Naive thymus-derived CD8-positive, alpha-beta T cell (primary cell): ENCODE measurements at regions of chr11 and their contacts with region 1.

Region 1: GRCh38 chr11:66677599-66678375 is at the start of gene RBM4B:
- DNase-seq: peak; percentile 93 to 98 (median 96)
- ATAC-seq: peak; percentile 83 to 84
- H3K4me3 Mint-ChIP-seq: peak within 1 kb of the TSS; percentile 85 to 98 (median 96)
- H3K27ac Mint-ChIP-seq: peak within 1 kb of the TSS; percentile 95 to 100 (median 99)
- H3K4me1 Mint-ChIP-seq: peaks cover 21 to 48% (median 42%) of the 10 kb centered on the region in 4 donors
- H3K27me3 Mint-ChIP-seq: no peaks in the 10 kb centered on the region
- polyA plus RNA-seq, gene RBM4B: 7.7 to 12.3 (median 10.8) TPM

Region 2: GRCh38 chr11:66438504-66439466 is 239.0 kb before region 1 on chr11 and contains the start of gene MRPL11:
- POLR2A ChIA-PET with region 1: interaction called, 13 read pairs
- DNase-seq: peak; percentile 74 to 95 (median 88)
- ATAC-seq: peak; percentile 96 to 98
- H3K4me3 Mint-ChIP-seq: peak within 1 kb of the TSS; percentile 87 to 96 (median 92)
- H3K27ac Mint-ChIP-seq: peak within 1 kb of the TSS; percentile 24 to 99 (median 98)
- H3K4me1 Mint-ChIP-seq: peaks cover 5 to 16% (median 9%) of the 10 kb centered on the region in 4 donors
- H3K27me3 Mint-ChIP-seq: peaks cover 0 to 6% (median 0%) of the 10 kb centered on the region in 5 donors
- polyA plus RNA-seq, gene MRPL11: 86.9 to 98.2 (median 87.9) TPM

Region 3: DNA sequence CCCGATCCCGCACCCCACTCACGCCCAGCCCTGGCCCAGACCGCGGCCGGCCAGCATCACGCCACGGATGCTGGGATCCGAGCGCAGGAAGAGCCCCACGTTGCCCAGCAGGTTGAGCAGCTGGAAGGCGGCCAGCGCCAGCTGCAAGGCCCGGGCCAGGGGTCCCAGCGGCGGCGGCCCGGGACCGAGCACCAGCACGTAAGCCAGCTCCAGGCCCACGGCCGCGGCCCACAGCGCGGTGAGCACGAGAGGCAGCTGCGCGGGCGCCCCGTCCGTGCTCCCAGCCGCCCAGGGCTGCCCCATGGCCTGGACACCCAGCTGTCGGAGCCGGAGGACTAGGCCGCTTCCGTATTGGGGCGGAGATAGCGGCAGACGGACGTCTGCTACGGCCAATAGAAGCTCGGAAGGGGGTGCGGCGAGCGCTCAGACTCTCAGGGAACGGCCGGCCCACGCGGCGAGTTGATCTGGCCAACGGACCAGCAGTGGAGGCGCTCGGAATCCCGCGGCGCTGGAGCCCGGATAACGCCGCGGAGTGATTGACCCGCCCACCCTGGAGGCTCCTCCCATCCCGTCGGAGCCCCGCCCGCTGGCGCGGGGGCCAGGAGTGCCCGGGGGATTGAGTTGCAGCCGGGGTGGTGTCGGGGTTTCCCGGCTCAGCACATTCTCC is 132.0 kb before region 1 on chr11 and contains the start of gene ZDHHC24:
- POLR2A ChIA-PET with region 1: interaction called, 41 read pairs
- DNase-seq: peak; percentile 64 to 84 (median 77)
- ATAC-seq: peak; percentile 77 to 78
- H3K4me3 Mint-ChIP-seq: peak within 1 kb of the TSS; percentile 85 to 95 (median 88)
- H3K27ac Mint-ChIP-seq: peak within 1 kb of the TSS; percentile 71 to 96 (median 92)
- H3K4me1 Mint-ChIP-seq: peaks cover 36 to 47% (median 41%) of the 10 kb centered on the region in 4 donors
- H3K27me3 Mint-ChIP-seq: no peaks in the 10 kb centered on the region
- polyA plus RNA-seq, gene ZDHHC24: 9.6 to 14.1 (median 10.5) TPM

Region 4: GRCh38 chr11:66579017-66579606 is 98.7 kb before region 1 on chr11:
- POLR2A ChIA-PET with region 1: interaction called, 46 read pairs
- DNase-seq: peak; percentile 64 to 89 (median 76)
- ATAC-seq: peak; percentile 86 to 99
- H3K4me3 Mint-ChIP-seq: peak overlapping the region in 1 of 10 donors; percentile 19
- H3K27ac Mint-ChIP-seq: peak overlapping the region in 3 of 10 donors; percentile 5 to 60 (median 17)
- H3K4me1 Mint-ChIP-seq: peaks cover 6 to 14% (median 9%) of the 10 kb centered on the region in 4 donors
- H3K27me3 Mint-ChIP-seq: peaks cover 6 to 22% (median 19%) of the 10 kb centered on the region in 5 donors

Region 5: DNA sequence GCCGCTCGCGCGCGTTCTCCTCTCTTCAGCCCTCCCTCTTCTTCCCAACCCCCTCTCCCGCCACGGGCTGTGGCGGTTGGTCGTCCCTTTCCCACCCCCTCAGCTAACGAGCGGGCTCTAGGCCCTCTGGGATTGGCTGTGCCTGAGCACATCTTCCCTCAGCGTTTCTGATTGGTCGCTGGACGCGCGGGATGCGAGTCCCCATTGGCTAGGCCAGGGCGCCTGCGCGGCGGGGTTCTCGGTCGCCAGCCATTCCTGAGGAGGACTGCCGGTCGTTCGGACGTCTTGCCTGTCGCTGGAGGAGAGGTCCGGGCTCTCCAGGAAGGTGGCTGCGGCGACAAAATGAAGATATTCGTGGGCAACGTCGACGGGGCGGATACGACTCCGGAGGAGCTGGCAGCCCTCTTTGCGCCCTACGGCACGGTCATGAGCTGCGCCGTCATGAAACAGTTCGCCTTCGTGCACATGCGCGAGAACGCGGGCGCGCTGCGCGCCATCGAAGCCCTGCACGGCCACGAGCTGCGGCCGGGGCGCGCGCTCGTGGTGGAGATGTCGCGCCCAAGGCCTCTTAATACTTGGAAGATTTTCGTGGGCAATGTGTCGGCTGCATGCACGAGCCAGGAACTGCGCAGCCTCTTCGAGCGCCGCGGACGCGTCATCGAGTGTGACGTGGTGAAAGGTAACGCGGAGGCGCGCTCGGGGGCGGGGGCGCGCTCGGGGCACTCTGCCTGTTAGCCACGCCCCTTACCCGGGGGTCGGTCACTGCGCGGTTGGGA is 61.2 kb before region 1 on chr11 and contains the start of gene RBM14:
- POLR2A ChIA-PET with region 1: interaction called, 93 read pairs
- DNase-seq: peak; percentile 97 to 100 (median 98)
- ATAC-seq: peak; percentile 80 to 81
- H3K4me3 Mint-ChIP-seq: peak within 1 kb of the TSS; percentile 96 to 100 (median 98)
- H3K27ac Mint-ChIP-seq: peak within 1 kb of the TSS; percentile 96 to 100 (median 99)
- H3K4me1 Mint-ChIP-seq: peaks cover 24 to 56% (median 49%) of the 10 kb centered on the region in 4 donors
- H3K27me3 Mint-ChIP-seq: peaks cover 0 to 5% (median 0%) of the 10 kb centered on the region in 5 donors
- polyA plus RNA-seq, gene RBM14: 70.2 to 91.8 (median 83.3) TPM

Region 6: DNA sequence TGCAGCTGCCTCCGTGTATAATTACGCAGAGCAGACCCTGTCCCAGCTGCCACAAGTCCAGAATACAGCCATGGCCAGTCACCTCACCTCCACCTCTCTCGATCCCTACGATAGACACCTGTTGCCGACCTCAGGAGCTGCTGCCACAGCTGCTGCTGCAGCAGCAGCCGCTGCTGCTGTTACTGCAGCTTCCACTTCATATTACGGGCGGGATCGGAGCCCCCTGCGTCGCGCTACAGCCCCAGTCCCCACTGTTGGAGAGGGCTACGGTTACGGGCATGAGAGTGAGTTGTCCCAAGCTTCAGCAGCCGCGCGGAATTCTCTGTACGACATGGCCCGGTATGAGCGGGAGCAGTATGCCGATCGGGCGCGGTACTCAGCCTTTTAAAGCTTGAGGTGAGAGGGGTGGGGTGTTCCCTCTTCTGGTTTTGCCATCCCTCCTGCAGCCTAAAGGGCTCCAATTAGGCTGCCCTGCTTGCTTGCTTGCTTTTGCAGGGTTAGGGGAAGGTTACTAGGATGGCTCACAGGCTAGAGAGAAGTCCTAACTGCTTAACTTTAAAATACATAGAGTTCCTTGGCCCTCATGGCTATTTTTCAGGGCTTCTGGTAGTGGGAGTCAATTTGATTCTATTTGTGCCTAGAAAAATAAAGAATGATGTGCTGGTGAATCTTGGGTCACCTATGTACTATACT is 33.9 kb before region 1 on chr11:
- POLR2A ChIA-PET with region 1: interaction called, 51 read pairs
- DNase-seq: no peak
- ATAC-seq: no peak
- H3K4me3 Mint-ChIP-seq: peak overlapping the region; percentile 89 to 99 (median 95)
- H3K27ac Mint-ChIP-seq: peak overlapping the region; percentile 7 to 89 (median 71)
- H3K4me1 Mint-ChIP-seq: peaks cover 61 to 93% (median 90%) of the 10 kb centered on the region in 4 donors
- H3K27me3 Mint-ChIP-seq: no peaks in the 10 kb centered on the region

Region 7: DNA sequence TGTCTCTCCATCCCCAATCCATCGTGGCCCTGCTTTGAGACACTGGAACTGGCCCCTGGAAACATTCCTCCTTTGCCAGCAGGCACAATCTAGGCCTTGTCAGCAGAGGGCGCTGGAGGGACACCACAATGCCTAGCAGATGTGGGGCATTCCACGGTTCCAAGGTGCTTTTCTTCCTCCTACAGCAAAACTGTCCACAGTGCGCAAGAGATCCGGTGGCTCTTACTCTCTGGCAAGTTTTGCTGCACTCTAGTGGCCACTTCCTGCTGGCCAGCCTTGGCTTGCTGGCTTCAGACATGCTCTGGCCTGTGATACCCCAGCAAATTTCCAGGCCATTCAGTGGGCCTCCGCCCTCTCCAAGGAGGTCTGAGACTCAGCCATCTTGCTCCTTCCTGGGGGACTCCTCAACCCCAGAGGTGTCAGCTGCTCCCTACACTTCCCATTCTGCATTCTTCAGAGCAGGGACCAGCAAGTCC is 17.0 kb after region 1 on chr11:
- POLR2A ChIA-PET with region 1: no interaction called
- DNase-seq: peak; percentile 72 to 91 (median 80)
- ATAC-seq: peak; percentile 90 to 92
- H3K4me3 Mint-ChIP-seq: no peak overlapping the region
- H3K27ac Mint-ChIP-seq: no peak overlapping the region
- H3K4me1 Mint-ChIP-seq: peaks cover 0 to 7% (median 2%) of the 10 kb centered on the region in 4 donors
- H3K27me3 Mint-ChIP-seq: peaks cover 0 to 2% (median 0%) of the 10 kb centered on the region in 5 donors

Region 8: DNA sequence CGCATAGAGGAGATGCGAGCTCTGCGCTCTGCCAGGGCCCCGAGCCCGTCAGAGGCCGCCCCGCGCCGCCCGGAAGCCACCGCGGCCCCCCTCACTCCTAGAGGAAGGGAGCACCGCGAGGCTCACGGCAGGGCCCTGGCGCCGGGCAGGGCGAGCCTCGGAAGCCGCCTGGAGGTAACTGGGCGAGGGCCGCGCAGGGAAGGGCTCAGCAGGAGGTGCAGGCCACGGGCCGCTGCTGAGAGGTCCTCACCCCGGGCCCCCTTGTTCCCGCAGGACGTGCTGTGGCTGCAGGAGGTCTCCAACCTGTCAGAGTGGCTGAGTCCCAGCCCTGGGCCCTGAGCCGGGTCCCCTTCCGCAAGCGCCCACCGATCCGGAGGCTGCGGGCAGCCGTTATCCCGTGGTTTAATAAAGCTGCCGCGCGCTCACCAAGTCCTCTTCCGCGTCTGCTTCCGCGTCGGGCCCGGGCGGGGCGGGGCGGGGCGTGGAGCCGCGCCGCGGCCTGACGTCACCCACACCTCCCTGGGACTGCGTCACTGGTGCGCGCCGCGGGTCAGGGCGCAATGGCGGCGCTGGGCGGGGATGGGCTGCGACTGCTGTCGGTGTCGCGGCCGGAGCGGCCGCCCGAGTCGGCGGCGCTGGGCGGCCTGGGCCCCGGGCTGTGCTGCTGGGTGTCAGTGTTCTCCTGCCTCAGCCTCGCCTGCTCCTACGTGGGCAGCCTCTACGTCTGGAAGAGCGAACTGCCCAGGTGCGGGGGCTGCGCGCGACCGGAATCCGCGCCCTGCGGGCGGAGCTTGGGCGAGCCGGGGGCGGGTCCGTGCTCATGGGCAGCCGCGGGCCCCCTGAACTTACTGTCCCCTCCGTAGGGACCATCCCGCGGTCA is 165.3 kb after region 1 on chr11 and contains the start of gene RCE1:
- POLR2A ChIA-PET with region 1: interaction called, 19 read pairs
- DNase-seq: peak; percentile 86 to 95 (median 91)
- ATAC-seq: peak; percentile 79 to 86
- H3K4me3 Mint-ChIP-seq: peak within 1 kb of the TSS; percentile 90 to 95 (median 94)
- H3K27ac Mint-ChIP-seq: peak within 1 kb of the TSS; percentile 84 to 97 (median 96)
- H3K4me1 Mint-ChIP-seq: peaks cover 28 to 62% (median 45%) of the 10 kb centered on the region in 4 donors
- H3K27me3 Mint-ChIP-seq: no peaks in the 10 kb centered on the region
- polyA plus RNA-seq, gene RCE1: 18.1 to 27.1 (median 18.4) TPM